Naive thymus-derived CD4-positive, alpha-beta T cell (primary cell): ENCODE measurements at regions of chr6 and their contacts with region 1.

Region 1: DNA sequence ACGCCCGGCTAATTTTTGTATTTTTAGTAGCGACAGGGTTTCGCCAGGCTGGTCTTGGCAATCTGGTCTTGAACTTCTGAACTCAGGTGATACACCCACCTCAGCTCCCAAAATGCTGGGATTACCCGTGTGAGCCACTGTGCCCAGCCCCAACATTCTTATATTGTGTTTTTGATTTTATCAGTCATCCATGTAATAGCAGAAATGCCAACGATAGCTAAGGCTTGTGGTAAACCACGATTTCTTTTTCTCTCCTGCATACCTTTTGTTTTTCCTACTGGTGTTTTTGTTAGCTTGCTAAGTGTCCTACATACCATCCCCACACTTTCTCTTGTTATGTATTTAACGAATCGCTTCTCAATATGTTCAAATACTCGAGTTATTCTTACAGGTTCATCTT is 12.1 kb downstream of the PHACTR2 start:
- DNase-seq: no peak
- ATAC-seq: no peak
- H3K4me3 ChIP-seq: no peak overlapping the region
- H3K4me3 Mint-ChIP-seq: peak overlapping the region in 1 of 10 donors; percentile 38
- H3K27ac ChIP-seq: no peak overlapping the region
- H3K27ac Mint-ChIP-seq: no peak overlapping the region
- H3K4me1 ChIP-seq: peaks cover 0 to 3% of the 10 kb centered on the region in 2 donors
- H3K4me1 Mint-ChIP-seq: peaks cover 10 to 37% (median 26%) of the 10 kb centered on the region in 7 donors
- H3K27me3 ChIP-seq: no peaks in the 10 kb centered on the region
- H3K27me3 Mint-ChIP-seq: no peaks in the 10 kb centered on the region

Region 2: GRCh38 chr6:143677891-143678791 is 11.7 kb before region 1 on chr6 and contains the start of gene PHACTR2:
- CTCF ChIA-PET with region 1: no interaction called
- POLR2A ChIA-PET with region 1: no interaction called
- intact Hi-C with region 1: loop called in 1 of 2 experiments (anchors 1 kb)
- DNase-seq: peak; percentile 22 to 64 (median 51)
- ATAC-seq: peak; percentile 89
- H3K4me3 ChIP-seq: peak within 1 kb of the TSS; percentile 62
- H3K4me3 Mint-ChIP-seq: peak within 1 kb of the TSS; percentile 81 to 93 (median 86)
- H3K27ac ChIP-seq: peak within 1 kb of the TSS; percentile 58
- H3K27ac Mint-ChIP-seq: peak within 1 kb of the TSS; percentile 13 to 78 (median 55)
- H3K4me1 ChIP-seq: peaks cover 0 to 8% of the 10 kb centered on the region in 2 donors
- H3K4me1 Mint-ChIP-seq: peaks cover 8 to 34% (median 14%) of the 10 kb centered on the region in 7 donors
- H3K27me3 ChIP-seq: no peaks in the 10 kb centered on the region
- H3K27me3 Mint-ChIP-seq: peaks cover 4 to 46% (median 14%) of the 10 kb centered on the region in 5 donors
- total RNA-seq, gene PHACTR2: 15.0 to 42.2 (median 23.2) TPM